ENCODE measurements at regions of chr2 and their contacts with region 1.

Region 1: GRCh38 chr2:27086090-27086723 is 365 bp upstream of the KHK start:
- DNase-seq: peak; percentile 98
- ATAC-seq: peak; percentile 89
- H3K4me3 Mint-ChIP-seq: peak overlapping the region; percentile 77
- H3K27ac Mint-ChIP-seq: peak overlapping the region; percentile 82
- H3K4me1 Mint-ChIP-seq: peaks cover 24% of the 10 kb centered on the region
- H3K27me3 Mint-ChIP-seq: no peaks in the 10 kb centered on the region

Region 2: GRCh38 chr2:26785431-26786206 is 300.6 kb before region 1 on chr2 and contains the start of gene CENPA:
- CTCF ChIA-PET with region 1: no interaction called
- POLR2A ChIA-PET with region 1: no interaction called
- intact Hi-C with region 1: loop called in 1 of 2 experiments (anchors 1 kb)
- DNase-seq: peak; percentile 97
- ATAC-seq: peak; percentile 100
- H3K4me3 Mint-ChIP-seq: peak within 1 kb of the TSS; percentile 80
- H3K27ac Mint-ChIP-seq: peak within 1 kb of the TSS; percentile 79
- H3K4me1 Mint-ChIP-seq: peaks cover 16% of the 10 kb centered on the region
- H3K27me3 Mint-ChIP-seq: peaks cover 7% of the 10 kb centered on the region
- total RNA-seq, gene CENPA: 37.0 to 38.0 TPM

Region 3: GRCh38 chr2:26964446-26965130 is 121.6 kb before region 1 on chr2:
- CTCF ChIA-PET with region 1: interaction called, 4 read pairs
- POLR2A ChIA-PET with region 1: no interaction called
- intact Hi-C with region 1: loop called (anchors 1 to 5 kb)
- DNase-seq: no peak
- ATAC-seq: no peak
- H3K4me3 Mint-ChIP-seq: no peak overlapping the region
- H3K27ac Mint-ChIP-seq: no peak overlapping the region
- H3K4me1 Mint-ChIP-seq: peaks cover 5% of the 10 kb centered on the region
- H3K27me3 Mint-ChIP-seq: peaks cover 28% of the 10 kb centered on the region

Region 4: GRCh38 chr2:26970244-26970920 is 115.8 kb before region 1 on chr2 and contains the start of gene MAPRE3:
- CTCF ChIA-PET with region 1: no interaction called
- POLR2A ChIA-PET with region 1: no interaction called
- intact Hi-C with region 1: loop called in 1 of 2 experiments (anchors 1 kb)
- DNase-seq: peak; percentile 86
- ATAC-seq: peak; percentile 93
- H3K4me3 Mint-ChIP-seq: peak within 1 kb of the TSS; percentile 72
- H3K27ac Mint-ChIP-seq: peak within 1 kb of the TSS; percentile 5
- H3K4me1 Mint-ChIP-seq: peaks cover 15% of the 10 kb centered on the region
- H3K27me3 Mint-ChIP-seq: peaks cover 11% of the 10 kb centered on the region
- total RNA-seq, gene MAPRE3: 3.2 to 4.1 TPM

Region 5: GRCh38 chr2:27071277-27071989 is 14.8 kb before region 1 on chr2 and contains the start of gene OST4:
- CTCF ChIA-PET with region 1: interaction called, 24 read pairs
- POLR2A ChIA-PET with region 1: interaction called, 6 read pairs
- intact Hi-C with region 1: loop called (anchors 1 kb)
- DNase-seq: peak; percentile 94
- ATAC-seq: peak; percentile 89
- H3K4me3 Mint-ChIP-seq: peak within 1 kb of the TSS; percentile 96
- H3K27ac Mint-ChIP-seq: peak within 1 kb of the TSS; percentile 91
- H3K4me1 Mint-ChIP-seq: peaks cover 66% of the 10 kb centered on the region
- H3K27me3 Mint-ChIP-seq: no peaks in the 10 kb centered on the region
- total RNA-seq, gene OST4: 305 to 406 TPM

Region 6: DNA sequence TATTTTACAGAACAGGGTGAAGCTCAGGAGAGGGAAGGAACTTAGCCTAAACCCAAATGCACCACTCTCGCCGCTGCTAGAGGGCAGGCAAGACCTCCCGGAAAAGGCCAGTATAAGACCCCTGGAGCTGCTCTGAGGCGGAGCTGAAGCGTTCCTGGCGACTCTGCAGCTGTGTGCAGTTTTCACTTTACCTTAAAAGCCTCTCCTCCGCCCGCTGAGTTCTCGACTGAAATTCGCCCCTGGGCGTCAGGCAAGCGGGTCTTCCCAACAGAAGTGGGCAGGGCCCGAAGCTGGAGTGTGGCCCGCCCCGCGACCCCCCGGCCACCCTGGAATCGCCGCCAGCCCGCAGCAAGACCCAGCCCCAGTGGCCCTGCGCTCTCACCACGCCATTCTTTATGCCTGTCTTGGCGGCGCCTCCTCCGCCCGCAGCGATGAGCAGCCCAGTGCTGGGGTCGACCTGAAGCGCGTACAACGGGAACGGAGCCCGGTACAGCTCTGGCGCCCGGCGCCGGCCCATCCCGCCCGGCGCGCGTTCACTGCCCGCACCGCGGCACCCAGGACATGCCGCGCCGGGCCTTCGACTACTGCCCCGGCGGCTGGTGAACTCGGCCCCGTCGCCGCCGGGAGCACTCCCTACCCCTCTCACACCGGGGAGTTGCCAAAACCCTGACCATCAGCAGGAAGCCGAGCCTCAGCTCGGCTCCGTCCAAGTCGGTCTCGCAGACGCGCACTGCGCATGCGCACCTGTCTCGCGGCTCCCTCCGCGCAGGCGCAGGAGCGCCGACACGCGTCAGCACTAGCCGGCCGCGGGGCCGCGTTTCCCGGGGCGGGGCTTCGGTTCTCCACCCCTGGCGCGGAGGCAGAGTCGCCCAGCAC is 47.9 kb after region 1 on chr2 and contains the start of gene PREB:
- CTCF ChIA-PET with region 1: interaction called, 3 read pairs
- POLR2A ChIA-PET with region 1: no interaction called
- intact Hi-C with region 1: loop called in 1 of 2 experiments (anchors 1 kb)
- DNase-seq: peak; percentile 99
- ATAC-seq: peak; percentile 97
- H3K4me3 Mint-ChIP-seq: peak within 1 kb of the TSS; percentile 81
- H3K27ac Mint-ChIP-seq: peak within 1 kb of the TSS; percentile 94
- H3K4me1 Mint-ChIP-seq: peaks cover 16% of the 10 kb centered on the region
- H3K27me3 Mint-ChIP-seq: no peaks in the 10 kb centered on the region
- total RNA-seq, gene PREB: 59.7 to 59.9 TPM

Region 7: GRCh38 chr2:27217217-27218121 is 131.3 kb after region 1 on chr2 and contains the start of gene CAD:
- CTCF ChIA-PET with region 1: interaction called, 3 read pairs
- POLR2A ChIA-PET with region 1: no interaction called
- intact Hi-C with region 1: loop called in 1 of 2 experiments (anchors 1 kb)
- DNase-seq: peak; percentile 94
- ATAC-seq: peak; percentile 90
- H3K4me3 Mint-ChIP-seq: peak within 1 kb of the TSS; percentile 93
- H3K27ac Mint-ChIP-seq: peak within 1 kb of the TSS; percentile 87
- H3K4me1 Mint-ChIP-seq: peaks cover 37% of the 10 kb centered on the region
- H3K27me3 Mint-ChIP-seq: no peaks in the 10 kb centered on the region
- total RNA-seq, gene CAD: 107 to 147 TPM